ENCODE measurements at regions of chr9 and their contacts with region 1.

Region 1: GRCh38 chr9:127545196-127546124 is 66.6 kb upstream of the STXBP1 start:
- DNase-seq: peak; percentile 83
- H3K4me3 ChIP-seq: 0 out of 2 replicates have a peak overlapping the region, but pooled peaks have one; percentile 11
- H3K4me3 Mint-ChIP-seq: peak overlapping the region; percentile 69
- H3K27ac Mint-ChIP-seq: peak overlapping the region; percentile 93
- H3K4me1 ChIP-seq: peaks cover 33% of the 10 kb centered on the region
- H3K4me1 Mint-ChIP-seq: peaks cover 38% of the 10 kb centered on the region
- H3K27me3 ChIP-seq: no peaks in the 10 kb centered on the region
- H3K27me3 Mint-ChIP-seq: no peaks in the 10 kb centered on the region
- CTCF ChIP-seq: no peak

Region 2: DNA sequence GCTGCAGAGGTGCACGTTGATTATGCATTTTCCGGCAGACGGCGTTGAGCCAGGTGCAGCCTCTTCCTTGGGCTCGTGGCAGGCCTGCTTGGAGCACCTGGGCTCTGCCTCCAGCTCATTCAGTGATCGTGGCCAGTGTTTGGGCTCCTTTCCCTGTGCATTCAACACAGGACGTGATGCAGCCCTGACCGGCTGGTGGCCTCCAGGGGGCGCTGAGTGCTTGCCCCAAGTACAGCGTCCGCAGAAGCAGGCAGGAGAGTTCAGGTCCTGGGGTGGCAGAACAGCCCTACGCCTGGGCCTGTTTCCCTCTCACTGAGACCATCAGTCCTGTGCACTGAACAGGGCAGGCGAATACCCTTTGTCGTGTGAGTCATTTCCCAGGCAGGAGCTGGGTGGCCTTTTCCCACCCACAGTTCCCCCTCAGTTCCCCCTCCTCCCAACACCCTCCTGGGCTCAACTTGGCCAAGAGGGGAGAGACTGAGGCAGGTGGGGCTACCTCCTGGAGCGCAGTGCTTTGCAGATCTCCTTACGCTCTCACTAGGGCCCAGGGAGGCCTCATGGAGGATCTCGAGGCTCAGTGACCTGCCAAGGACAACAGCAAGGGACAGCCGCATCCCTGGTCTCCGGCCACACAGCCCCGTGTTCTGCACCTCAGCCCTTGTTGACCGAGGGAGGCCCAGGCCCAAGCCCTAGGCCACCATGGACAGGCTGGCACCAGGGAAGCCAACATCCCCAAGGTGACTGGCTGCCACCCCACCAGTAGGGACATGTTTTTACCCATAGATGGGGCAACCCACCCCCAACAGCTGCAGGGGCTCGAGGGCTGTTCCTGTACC is 41.3 kb before region 1 on chr9:
- CTCF ChIA-PET with region 1: no interaction called
- POLR2A ChIA-PET with region 1: no interaction called
- intact Hi-C with region 1: loop called (anchors 2 kb)
- DNase-seq: peak; percentile 87
- H3K4me3 ChIP-seq: no peak overlapping the region
- H3K4me3 Mint-ChIP-seq: no peak overlapping the region
- H3K27ac Mint-ChIP-seq: no peak overlapping the region
- H3K4me1 ChIP-seq: no peaks in the 10 kb centered on the region
- H3K4me1 Mint-ChIP-seq: no peaks in the 10 kb centered on the region
- H3K27me3 ChIP-seq: no peaks in the 10 kb centered on the region
- H3K27me3 Mint-ChIP-seq: no peaks in the 10 kb centered on the region
- CTCF ChIP-seq: peak; percentile 90 to 94

Region 3: DNA sequence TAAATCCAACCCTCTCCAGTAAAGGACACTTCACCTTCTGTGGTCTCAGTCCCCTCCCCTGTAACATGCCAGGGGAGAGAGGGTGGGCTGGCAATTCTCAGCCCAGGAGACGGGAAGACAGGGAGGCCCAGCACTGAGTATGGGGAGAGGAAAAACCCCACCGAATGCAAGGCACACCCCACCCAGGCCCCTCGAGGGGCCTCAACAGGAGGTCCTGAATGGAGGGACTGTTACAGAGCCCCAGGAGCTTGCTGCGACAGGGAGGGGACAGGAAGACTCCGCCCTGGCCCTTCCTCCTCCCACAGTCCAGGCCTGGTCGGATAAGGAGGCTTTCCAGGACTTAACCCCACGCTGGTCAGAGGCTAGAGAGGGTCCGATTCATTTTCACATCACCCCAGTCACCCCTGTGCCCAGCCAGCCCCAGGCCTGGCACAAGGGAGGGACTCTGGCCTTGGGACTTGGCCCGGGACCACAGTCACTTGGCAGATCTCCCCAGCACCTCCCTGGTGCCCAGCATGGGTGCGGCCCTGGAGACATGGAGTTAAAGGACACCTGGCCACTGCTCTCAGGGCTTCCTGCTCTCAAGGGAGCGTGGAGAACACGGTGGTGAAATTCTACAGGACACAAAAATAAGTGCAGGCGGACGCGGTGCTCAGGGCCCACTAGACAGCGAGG is 21.7 kb after region 1 on chr9:
- CTCF ChIA-PET with region 1: no interaction called
- POLR2A ChIA-PET with region 1: interaction called, 3 read pairs
- intact Hi-C with region 1: loop called (anchors 1 kb)
- DNase-seq: peak; percentile 65 to 78
- H3K4me3 ChIP-seq: peak overlapping the region; percentile 68
- H3K4me3 Mint-ChIP-seq: peak overlapping the region; percentile 79
- H3K27ac Mint-ChIP-seq: peak overlapping the region; percentile 72
- H3K4me1 ChIP-seq: peaks cover 18% of the 10 kb centered on the region
- H3K4me1 Mint-ChIP-seq: peaks cover 8% of the 10 kb centered on the region
- H3K27me3 ChIP-seq: no peaks in the 10 kb centered on the region
- H3K27me3 Mint-ChIP-seq: no peaks in the 10 kb centered on the region
- CTCF ChIP-seq: no peak

Measured in Caco-2 (cell line).